ENCODE measurements at regions of chr11 and their contacts with region 1.

Region 1: GRCh38 chr11:128630367-128631230 is 43.2 kb upstream of the ETS1 start:
- DNase-seq: peak; percentile 84 to 89 (median 86)
- ATAC-seq: peak; percentile 88
- H3K4me3 ChIP-seq: no peak overlapping the region
- H3K27ac ChIP-seq: no peak overlapping the region
- H3K4me1 ChIP-seq: peaks cover 12% of the 10 kb centered on the region
- H3K27me3 ChIP-seq: no peaks in the 10 kb centered on the region
- CTCF ChIP-seq: peak; percentile 66 to 94 (median 91)
- POLR2A ChIP-seq: no peak

Region 2: DNA sequence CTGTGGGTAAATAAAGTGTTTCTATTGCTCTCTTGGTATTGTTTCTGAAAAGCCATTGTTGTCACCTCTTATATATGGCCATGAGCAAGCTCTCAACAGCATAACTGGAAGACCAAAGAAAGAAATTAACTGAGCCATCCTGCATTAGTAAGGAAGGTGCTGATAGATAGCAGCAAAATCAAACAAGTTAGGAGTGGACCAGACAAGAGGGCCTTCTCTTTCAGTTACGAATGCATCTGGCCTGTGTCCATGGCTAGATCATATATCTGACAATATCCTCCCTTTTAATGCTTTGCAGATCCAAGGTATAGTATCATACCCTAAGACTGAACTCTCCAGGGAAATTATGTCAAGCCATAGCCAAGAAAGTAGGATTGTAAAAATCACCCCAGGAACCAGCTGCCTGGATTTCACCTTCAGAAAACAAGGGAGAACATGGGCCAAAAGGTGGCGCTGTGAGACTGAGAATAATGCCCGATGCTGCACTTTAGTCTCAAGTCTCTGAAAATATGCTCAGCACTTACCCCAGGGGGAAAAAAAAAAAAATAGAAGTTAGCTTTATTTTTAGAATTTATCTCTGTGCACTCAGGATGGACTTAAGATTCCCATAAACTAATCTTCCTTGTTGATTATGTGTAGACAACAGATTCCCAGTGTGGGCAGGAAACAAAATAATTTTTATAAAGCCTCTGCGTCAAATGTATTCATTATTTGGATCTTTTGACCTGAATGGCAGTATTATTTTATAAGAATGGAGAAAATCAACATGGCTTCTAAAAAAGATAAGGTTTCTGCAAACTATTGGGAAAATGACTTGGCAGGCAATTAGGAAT is 458.3 kb before region 1 on chr11:
- intact Hi-C with region 1: loop called (anchors 10 kb)
- DNase-seq: peak; percentile 80 to 87 (median 84)
- ATAC-seq: peak; percentile 78
- H3K4me3 ChIP-seq: no peak overlapping the region
- H3K27ac ChIP-seq: no peak overlapping the region
- H3K4me1 ChIP-seq: no peaks in the 10 kb centered on the region
- H3K27me3 ChIP-seq: no peaks in the 10 kb centered on the region
- CTCF ChIP-seq: peak; percentile 39 to 83 (median 79)
- POLR2A ChIP-seq: no peak

Region 3: DNA sequence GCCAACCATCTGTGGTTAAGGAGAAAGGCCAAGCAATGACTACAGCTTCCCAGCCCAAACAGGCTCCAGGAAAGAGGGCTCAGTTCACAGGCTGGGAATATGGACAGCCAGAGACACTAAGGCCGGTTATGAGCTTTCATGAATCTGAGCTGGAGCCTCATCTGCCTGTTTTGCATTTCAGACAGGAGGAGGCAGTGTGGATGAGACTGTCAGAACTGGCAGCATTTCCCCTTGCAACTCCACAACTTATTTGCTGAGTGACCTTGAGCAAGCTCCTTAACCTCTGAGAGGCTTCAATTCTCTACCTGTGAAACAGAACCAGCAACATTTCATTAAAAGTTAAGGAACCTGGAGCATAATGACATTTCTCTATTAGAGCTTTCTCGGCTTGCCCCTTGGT is 307.2 kb before region 1 on chr11:
- intact Hi-C with region 1: no loop called
- DNase-seq: no peak
- ATAC-seq: no peak
- H3K4me3 ChIP-seq: no peak overlapping the region
- H3K27ac ChIP-seq: no peak overlapping the region
- H3K4me1 ChIP-seq: no peaks in the 10 kb centered on the region
- H3K27me3 ChIP-seq: no peaks in the 10 kb centered on the region
- CTCF ChIP-seq: peak in 3 of 7 experiments; percentile 8 to 13 (median 8)
- POLR2A ChIP-seq: no peak

Region 4: GRCh38 chr11:128506999-128507611 is 123.5 kb before region 1 on chr11:
- intact Hi-C with region 1: no loop called
- DNase-seq: peak; percentile 77 to 88 (median 84)
- ATAC-seq: peak; percentile 96
- H3K4me3 ChIP-seq: no peak overlapping the region
- H3K27ac ChIP-seq: peak overlapping the region; percentile 75 to 85 (median 82)
- H3K4me1 ChIP-seq: peaks cover 38% of the 10 kb centered on the region
- H3K27me3 ChIP-seq: no peaks in the 10 kb centered on the region
- CTCF ChIP-seq: no peak
- POLR2A ChIP-seq: peak; percentile 48 to 79 (median 77)

Measured in body of pancreas (tissue), 4 donors.